Activated CD4-positive, alpha-beta memory T cell treated with anti-CD3 and anti-CD28 coated beads for 36 hours (primary cell): ENCODE measurements at regions of chr17 and their contacts with region 1.

Region 1: DNA sequence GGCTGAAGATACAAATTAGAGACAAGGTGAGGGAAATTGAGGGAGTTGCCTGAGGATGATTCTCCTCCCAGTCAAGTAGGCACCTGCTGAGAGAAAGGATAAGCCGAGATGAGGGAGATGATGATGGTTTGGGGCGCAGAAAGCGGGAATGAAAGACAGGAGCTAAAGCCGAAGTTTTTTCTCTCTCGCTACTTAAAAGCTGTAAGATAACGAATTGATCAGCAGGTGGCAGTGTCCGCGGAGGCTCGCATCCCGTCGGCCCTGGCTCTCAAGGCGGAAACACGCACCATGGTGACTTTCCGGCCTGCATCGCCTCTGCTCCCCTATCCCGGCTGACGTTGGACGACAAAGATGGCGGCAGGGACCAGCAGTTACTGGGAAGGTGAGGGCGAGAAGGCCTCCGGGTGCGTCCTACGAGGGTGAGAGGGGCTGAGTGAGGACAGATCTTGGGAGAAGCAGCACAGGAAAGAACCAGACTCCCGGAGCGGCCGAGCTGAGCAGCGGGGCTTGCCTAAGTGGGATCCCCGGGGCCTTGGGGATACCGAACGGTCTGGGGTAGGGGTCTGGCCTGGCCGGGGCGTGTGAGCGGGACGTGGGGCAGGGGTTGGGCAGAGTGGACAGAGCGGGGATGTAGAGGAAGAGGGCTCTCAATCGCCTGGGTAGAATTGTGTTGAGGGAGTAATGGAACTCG is at the start of gene GOSR1:
- DNase-seq: peak; percentile 96
- H3K4me3 Mint-ChIP-seq: peak within 1 kb of the TSS; percentile 94
- H3K27ac Mint-ChIP-seq: peak within 1 kb of the TSS; percentile 94
- H3K4me1 Mint-ChIP-seq: peaks cover 34% of the 10 kb centered on the region
- H3K27me3 Mint-ChIP-seq: peaks cover 2% of the 10 kb centered on the region
- total RNA-seq, gene GOSR1: 39.0 to 39.9 TPM

Region 2: GRCh38 chr17:30116661-30117551 is 360.3 kb before region 1 on chr17 and contains the start of gene NSRP1:
- CTCF ChIA-PET with region 1: no interaction called
- POLR2A ChIA-PET with region 1: no interaction called
- intact Hi-C with region 1: loop called (anchors 5 kb)
- DNase-seq: peak; percentile 97
- H3K4me3 Mint-ChIP-seq: peak within 1 kb of the TSS; percentile 96
- H3K27ac Mint-ChIP-seq: peak within 1 kb of the TSS; percentile 99
- H3K4me1 Mint-ChIP-seq: peaks cover 41% of the 10 kb centered on the region
- H3K27me3 Mint-ChIP-seq: no peaks in the 10 kb centered on the region
- total RNA-seq, gene NSRP1: 24.3 to 26.5 TPM

Region 3: DNA sequence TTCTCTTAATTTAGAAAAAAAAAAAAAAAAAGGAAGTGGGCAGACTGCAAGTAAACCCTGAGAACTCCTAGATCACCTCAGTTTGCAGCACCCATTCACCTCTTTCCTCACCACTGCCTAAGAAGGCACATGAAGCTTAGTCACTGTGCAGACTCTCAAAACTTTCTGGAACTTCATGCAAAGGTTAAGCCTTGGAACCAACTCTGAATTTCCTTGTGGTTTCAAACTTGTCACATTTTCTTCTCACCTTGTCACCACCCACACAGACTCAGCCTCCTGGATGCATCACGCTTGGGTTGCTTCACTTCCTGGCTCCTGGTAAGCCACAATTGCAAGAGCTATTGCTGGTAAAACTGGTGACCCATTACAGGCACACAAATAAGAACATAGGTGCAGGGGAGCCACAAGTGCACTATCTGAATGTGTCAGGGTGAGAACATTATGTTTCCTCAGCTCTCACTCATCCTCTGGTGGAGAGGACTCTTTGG is 113.5 kb before region 1 on chr17:
- CTCF ChIA-PET with region 1: interaction called, 5 read pairs
- POLR2A ChIA-PET with region 1: interaction called, 3 read pairs
- intact Hi-C with region 1: loop called (anchors 5 kb)
- DNase-seq: peak; percentile 94
- H3K4me3 Mint-ChIP-seq: peak overlapping the region; percentile 13
- H3K27ac Mint-ChIP-seq: peak overlapping the region; percentile 78
- H3K4me1 Mint-ChIP-seq: peaks cover 28% of the 10 kb centered on the region
- H3K27me3 Mint-ChIP-seq: no peaks in the 10 kb centered on the region

Region 4: GRCh38 chr17:30503558-30503957 is 26.3 kb after region 1 on chr17:
- CTCF ChIA-PET with region 1: interaction called, 10 read pairs
- POLR2A ChIA-PET with region 1: no interaction called
- intact Hi-C with region 1: no loop called
- DNase-seq: no peak
- H3K4me3 Mint-ChIP-seq: no peak overlapping the region
- H3K27ac Mint-ChIP-seq: no peak overlapping the region
- H3K4me1 Mint-ChIP-seq: peaks cover 25% of the 10 kb centered on the region
- H3K27me3 Mint-ChIP-seq: no peaks in the 10 kb centered on the region

Region 5: DNA sequence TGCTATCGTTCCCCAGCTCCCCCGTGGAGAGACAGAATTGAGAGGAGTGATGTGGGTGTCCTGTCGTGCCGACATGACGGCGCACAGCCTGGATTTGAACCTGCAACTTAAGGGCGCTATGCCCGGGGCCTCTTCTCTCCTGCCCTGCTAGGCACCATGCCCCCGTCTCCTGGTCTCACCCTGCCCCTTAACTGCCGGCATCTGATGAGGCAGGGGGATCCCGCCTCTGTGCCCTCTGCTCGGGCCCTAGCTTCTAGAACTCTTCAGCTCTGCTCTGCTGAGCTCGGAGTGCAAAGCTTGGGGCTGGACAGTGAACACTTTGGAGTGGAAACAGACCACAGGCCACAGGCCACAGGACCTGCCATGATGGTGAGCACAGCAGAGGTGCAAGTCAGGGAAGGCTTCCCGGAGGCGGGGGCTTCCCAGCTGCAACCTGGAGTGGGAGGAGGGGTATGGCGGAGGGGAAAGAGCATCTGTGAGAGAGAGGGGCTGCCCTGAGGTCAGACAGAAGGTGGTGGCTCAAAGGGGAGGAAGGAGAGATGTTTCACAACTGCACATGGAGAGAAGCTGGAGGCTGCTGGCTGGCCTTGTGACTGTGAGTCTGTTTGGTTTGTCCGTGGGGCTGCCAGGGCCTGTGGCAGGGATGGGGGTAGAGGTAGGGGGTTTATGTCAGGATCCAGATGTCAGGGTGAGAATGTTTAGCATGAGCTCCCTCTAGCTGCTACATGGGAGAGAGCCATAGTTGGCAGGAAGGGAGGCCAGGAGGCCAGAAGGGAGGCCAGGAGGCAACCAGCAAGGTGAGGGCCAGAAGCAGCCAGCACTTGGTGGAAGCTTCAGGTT is 239.5 kb after region 1 on chr17:
- CTCF ChIA-PET with region 1: interaction called, 16 read pairs
- POLR2A ChIA-PET with region 1: no interaction called
- intact Hi-C with region 1: loop called (anchors 10 kb)
- DNase-seq: no peak
- H3K4me3 Mint-ChIP-seq: no peak overlapping the region
- H3K27ac Mint-ChIP-seq: no peak overlapping the region
- H3K4me1 Mint-ChIP-seq: peaks cover 6% of the 10 kb centered on the region
- H3K27me3 Mint-ChIP-seq: no peaks in the 10 kb centered on the region